ENCODE measurements at regions of chr10 and their contacts with region 1.

Region 1: GRCh38 chr10:28492116-28492920 is 40.6 kb upstream of the WAC start:
- DNase-seq: no peak
- ATAC-seq: no peak
- H3K4me3 ChIP-seq: no peak overlapping the region
- H3K27ac ChIP-seq: no peak overlapping the region
- H3K4me1 ChIP-seq: no peaks in the 10 kb centered on the region
- H3K27me3 ChIP-seq: no peaks in the 10 kb centered on the region
- CTCF ChIP-seq: no peak

Region 2: GRCh38 chr10:28545967-28546644 is 53.8 kb after region 1 on chr10:
- CTCF ChIA-PET with region 1: no interaction called
- POLR2A ChIA-PET with region 1: interaction called, 10 read pairs
- in situ Hi-C with region 1: no loop called
- intact Hi-C with region 1: no loop called
- DNase-seq: no peak
- ATAC-seq: no peak
- H3K4me3 ChIP-seq: no peak overlapping the region
- H3K27ac ChIP-seq: no peak overlapping the region
- H3K4me1 ChIP-seq: no peaks in the 10 kb centered on the region; the same call in 1 of the 2 replicates
- H3K27me3 ChIP-seq: no peaks in the 10 kb centered on the region
- CTCF ChIP-seq: no peak